PC-9 (cell line): ENCODE measurements at regions of chr15 and their contacts with region 1.

Region 1: GRCh38 chr15:62782039-62782791 is 260.3 kb upstream of the TPM1 start:
- DNase-seq: peak; percentile 63 to 78
- H3K4me3 ChIP-seq: no peak overlapping the region
- H3K27ac ChIP-seq: peak overlapping the region; percentile 48; the same call in 1 of the 2 replicates
- H3K4me1 ChIP-seq: peaks cover 11% of the 10 kb centered on the region
- H3K27me3 ChIP-seq: no peaks in the 10 kb centered on the region
- CTCF ChIP-seq: peak; percentile 80

Region 2: GRCh38 chr15:62857411-62857853 is 75.2 kb after region 1 on chr15:
- CTCF ChIA-PET with region 1: interaction called, 4 read pairs
- POLR2A ChIA-PET with region 1: no interaction called
- intact Hi-C with region 1: loop called (anchors 1 kb)
- DNase-seq: peak; percentile 85 to 93
- H3K4me3 ChIP-seq: peak overlapping the region; percentile 38; the same call in 1 of the 2 replicates
- H3K27ac ChIP-seq: peak overlapping the region; percentile 99
- H3K4me1 ChIP-seq: peaks cover 69% of the 10 kb centered on the region
- H3K27me3 ChIP-seq: no peaks in the 10 kb centered on the region
- CTCF ChIP-seq: no peak

Region 3: DNA sequence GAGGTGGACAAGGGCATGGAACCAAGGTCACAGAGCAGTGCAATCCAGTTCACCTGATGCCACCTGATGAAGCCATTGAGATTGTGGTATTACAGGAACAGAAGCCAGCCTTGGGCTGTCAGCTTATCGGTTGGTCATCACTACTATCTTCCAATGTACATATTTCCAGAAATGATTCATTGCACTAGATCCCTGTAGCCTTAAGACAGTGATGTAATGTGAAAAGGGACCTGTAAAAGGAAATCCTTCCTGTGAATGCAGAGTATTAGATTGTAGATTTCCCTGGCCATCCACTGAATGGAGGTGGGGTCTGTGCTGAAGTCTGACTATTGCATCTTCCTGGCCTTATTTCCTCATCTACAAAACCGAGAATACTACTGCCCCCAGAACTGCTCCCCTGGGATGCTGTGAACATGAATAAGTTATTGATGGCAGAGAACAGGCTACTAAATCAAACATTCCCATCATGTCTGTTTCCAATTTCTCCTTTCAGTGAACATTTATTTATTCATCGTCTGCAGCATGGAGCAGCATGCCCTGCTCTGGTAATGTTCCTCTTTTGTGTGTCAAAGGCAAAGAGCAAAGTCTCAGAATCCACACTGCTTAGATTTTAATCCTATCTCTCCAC is 212.9 kb after region 1 on chr15:
- CTCF ChIA-PET with region 1: no interaction called
- POLR2A ChIA-PET with region 1: no interaction called
- intact Hi-C with region 1: loop called (anchors 2 kb)
- DNase-seq: peak in 1 of 2 experiments; percentile 76
- H3K4me3 ChIP-seq: no peak overlapping the region
- H3K27ac ChIP-seq: no peak overlapping the region
- H3K4me1 ChIP-seq: peaks cover 41% of the 10 kb centered on the region
- H3K27me3 ChIP-seq: no peaks in the 10 kb centered on the region
- CTCF ChIP-seq: no peak

Region 4: DNA sequence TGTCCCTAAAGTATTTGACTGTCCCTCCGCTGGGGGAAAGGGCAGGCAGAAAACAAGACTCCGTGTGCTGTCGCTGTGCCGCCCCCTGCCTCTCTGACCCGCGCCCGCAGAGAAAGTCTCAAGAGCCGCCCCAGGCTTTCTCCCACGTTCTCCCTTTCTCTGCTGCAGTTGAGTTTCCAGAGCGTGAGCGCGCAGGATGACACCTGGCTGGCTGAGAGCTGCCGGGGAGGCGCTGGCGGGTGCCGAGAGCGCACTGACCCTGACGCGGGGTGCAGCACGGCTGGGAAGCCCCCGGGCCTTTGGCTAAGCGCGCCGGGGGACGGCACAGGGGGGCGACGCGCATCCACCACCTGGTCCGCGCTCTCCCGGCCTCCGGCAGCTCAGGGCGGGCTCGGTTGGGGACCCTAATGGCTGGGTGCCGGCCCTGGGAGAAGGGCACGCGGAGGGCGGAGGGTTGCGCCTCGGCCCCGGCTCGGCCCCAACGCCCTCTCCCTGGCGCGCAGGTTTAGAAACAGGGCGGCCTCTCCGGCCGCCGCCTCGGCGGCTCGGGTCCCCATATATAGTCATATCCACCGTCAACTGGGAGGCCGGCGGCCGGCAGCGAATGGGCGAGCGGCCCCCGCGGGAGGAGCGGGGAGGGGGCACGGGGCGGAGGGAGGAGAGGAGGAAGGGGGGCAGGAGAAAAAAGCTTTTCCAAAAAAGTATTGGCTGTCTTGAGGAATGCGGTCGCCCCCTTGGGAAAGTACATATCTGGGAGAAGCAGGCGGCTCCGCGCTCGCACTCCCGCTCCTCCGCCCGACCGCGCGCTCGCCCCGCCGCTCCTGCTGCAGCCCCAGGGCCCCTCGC is 260.0 kb after region 1 on chr15 and contains the start of gene TPM1:
- CTCF ChIA-PET with region 1: interaction called, 8 read pairs
- POLR2A ChIA-PET with region 1: no interaction called
- intact Hi-C with region 1: loop called (anchors 1 kb)
- DNase-seq: peak; percentile 69 to 83
- H3K4me3 ChIP-seq: peak within 1 kb of the TSS; percentile 80
- H3K27ac ChIP-seq: peak within 1 kb of the TSS; percentile 93
- H3K4me1 ChIP-seq: peaks cover 62% of the 10 kb centered on the region
- H3K27me3 ChIP-seq: no peaks in the 10 kb centered on the region
- CTCF ChIP-seq: no peak; the same call in 1 of the 2 replicates
- total RNA-seq, gene TPM1: 174 and 225 TPM in 2 replicates

Region 5: DNA sequence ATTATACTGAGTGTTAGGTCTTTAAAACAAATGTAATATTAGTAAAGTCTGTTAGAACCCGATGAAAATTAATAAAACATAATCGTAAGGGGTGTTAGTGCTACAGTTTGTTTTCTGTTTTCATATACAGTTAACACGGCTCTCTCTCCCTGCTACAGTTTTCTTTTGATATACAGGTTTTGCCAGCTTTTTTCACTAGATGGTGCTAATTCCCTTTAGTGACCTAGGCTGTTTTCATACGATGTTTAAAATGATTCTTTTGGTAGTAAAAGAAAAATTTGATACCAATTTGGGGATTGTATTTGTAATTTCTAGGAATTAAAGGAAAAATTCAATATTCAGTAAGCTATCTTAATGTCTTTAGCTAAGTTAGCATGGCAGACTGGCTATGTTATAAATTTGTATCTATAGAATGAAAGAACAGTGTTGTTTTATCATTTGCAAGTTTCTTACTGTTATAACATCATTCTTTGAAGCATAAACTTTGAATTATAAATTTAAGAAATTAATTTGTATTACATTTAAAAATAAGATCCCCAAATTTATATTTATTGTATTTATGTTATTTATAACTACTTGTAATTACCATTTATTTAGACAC is 506.7 kb after region 1 on chr15:
- CTCF ChIA-PET with region 1: no interaction called
- POLR2A ChIA-PET with region 1: no interaction called
- intact Hi-C with region 1: loop called (anchors 5 kb)
- DNase-seq: no peak
- H3K4me3 ChIP-seq: no peak overlapping the region
- H3K27ac ChIP-seq: no peak overlapping the region
- H3K4me1 ChIP-seq: no peaks in the 10 kb centered on the region
- H3K27me3 ChIP-seq: no peaks in the 10 kb centered on the region
- CTCF ChIP-seq: peak; percentile 75